PC-9 (cell line): ENCODE measurements at regions of chr16 and their contacts with region 1.

Region 1: GRCh38 chr16:28491970-28492474 is at the start of gene CLN3:
- DNase-seq: peak; percentile 95
- H3K4me3 ChIP-seq: peak within 1 kb of the TSS; percentile 78
- H3K27ac ChIP-seq: peak within 1 kb of the TSS; percentile 91
- H3K4me1 ChIP-seq: peaks cover 26% of the 10 kb centered on the region
- H3K27me3 ChIP-seq: no peaks in the 10 kb centered on the region
- CTCF ChIP-seq: no peak
- total RNA-seq, gene CLN3: 59.1 and 70.3 TPM in 2 replicates

Region 2: DNA sequence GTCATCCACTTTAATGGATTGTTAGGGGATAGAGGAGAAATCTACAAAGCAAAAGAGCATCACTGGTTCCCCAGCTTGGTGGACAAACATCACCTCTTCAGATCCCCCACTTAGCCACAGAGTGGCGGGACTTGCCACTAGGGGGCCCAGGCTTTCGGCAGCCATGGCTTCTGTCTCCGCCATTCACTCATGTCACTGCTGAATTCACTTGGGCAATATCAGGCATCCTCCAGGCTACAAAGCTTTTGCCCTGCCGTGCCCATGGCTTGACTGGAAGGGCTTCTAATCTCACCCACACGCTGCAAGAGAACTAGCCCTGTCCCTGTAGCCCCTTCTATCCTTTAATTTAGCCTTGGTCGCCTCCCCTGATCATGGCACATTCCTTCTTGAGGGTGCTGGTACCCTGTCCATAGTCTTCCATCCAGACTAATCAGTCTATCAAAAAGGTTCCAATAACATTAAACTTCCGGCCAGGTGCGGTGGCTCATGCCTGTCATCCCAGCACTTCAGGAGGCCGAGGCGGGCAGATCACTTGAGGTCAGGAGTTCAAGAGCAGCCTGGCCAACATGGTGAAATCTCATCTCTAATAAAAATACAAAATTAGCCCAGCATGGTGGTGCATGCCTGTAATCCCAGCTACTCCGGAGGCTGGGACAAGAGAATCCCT is 164.9 kb before region 1 on chr16:
- CTCF ChIA-PET with region 1: interaction called, 10 read pairs
- POLR2A ChIA-PET with region 1: no interaction called
- intact Hi-C with region 1: no loop called
- DNase-seq: peak; percentile 56 to 68
- H3K4me3 ChIP-seq: no peak overlapping the region
- H3K27ac ChIP-seq: no peak overlapping the region
- H3K4me1 ChIP-seq: no peaks in the 10 kb centered on the region; the same call in 1 of the 2 replicates
- H3K27me3 ChIP-seq: no peaks in the 10 kb centered on the region
- CTCF ChIP-seq: peak; percentile 79

Region 3: GRCh38 chr16:28504707-28505409 is 12.8 kb after region 1 on chr16:
- CTCF ChIA-PET with region 1: interaction called, 6 read pairs
- POLR2A ChIA-PET with region 1: interaction called, 9 read pairs
- intact Hi-C with region 1: loop called (anchors 1 kb)
- DNase-seq: peak; percentile 93 to 97
- H3K4me3 ChIP-seq: peak overlapping the region; percentile 20; the same call in 1 of the 2 replicates
- H3K27ac ChIP-seq: peak overlapping the region; percentile 70
- H3K4me1 ChIP-seq: peaks cover 41% of the 10 kb centered on the region
- H3K27me3 ChIP-seq: no peaks in the 10 kb centered on the region
- CTCF ChIP-seq: no peak

Region 4: DNA sequence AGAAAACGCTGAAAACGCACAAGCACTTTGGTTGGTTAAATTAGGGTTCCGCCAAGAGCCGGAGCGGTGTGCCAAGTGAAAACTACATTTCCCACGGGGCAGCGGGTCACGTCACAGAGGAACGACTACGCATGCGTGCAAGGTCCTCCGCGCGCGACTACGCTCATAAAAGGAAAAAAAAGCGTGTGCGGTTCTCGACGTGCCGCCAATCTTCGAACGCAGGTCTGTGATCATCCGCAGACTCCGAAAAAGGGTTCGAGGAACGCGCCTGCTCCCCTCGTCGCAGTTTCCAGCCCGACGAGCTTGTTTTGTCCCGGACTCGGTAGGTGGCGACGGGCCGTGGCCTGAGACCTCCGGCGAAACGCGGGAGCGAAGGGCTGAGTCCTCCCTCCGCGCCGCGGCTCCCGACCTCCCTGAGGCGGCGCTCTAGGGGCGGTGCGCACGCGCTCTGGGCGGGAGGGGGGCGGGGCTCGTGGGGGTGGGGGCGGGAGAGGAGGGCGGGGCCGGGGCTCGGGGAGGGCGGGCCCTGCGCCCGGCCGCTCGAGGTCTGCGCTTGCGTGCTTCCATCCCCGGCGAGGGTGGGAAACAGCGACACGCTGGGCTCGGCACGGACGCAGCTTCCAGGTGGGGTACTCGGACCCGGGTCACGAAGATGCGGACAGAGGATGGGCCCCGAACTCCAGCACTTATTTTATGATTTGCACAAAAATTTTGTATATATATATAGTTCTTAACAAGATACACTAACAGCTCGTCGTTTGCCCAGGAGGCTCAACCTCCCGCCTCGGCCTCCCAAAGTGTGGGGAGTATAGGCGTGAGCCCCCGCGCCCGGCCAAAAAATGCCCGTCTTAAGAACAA is 62.0 kb after region 1 on chr16 and contains the start of gene SGF29:
- CTCF ChIA-PET with region 1: interaction called, 4 read pairs
- POLR2A ChIA-PET with region 1: interaction called, 11 read pairs
- intact Hi-C with region 1: loop called (anchors 1 kb)
- DNase-seq: peak; percentile 72 to 94
- H3K4me3 ChIP-seq: peak within 1 kb of the TSS; percentile 74
- H3K27ac ChIP-seq: peak within 1 kb of the TSS; percentile 93
- H3K4me1 ChIP-seq: peaks cover 16% of the 10 kb centered on the region
- H3K27me3 ChIP-seq: no peaks in the 10 kb centered on the region
- CTCF ChIP-seq: peak; percentile 36; the same call in 1 of the 2 replicates
- total RNA-seq, gene SGF29: 45.3 and 51.1 TPM in 2 replicates

Region 5: GRCh38 chr16:28589930-28590329 is 97.9 kb after region 1 on chr16:
- CTCF ChIA-PET with region 1: no interaction called
- POLR2A ChIA-PET with region 1: no interaction called
- intact Hi-C with region 1: no loop called
- DNase-seq: no peak
- H3K4me3 ChIP-seq: no peak overlapping the region
- H3K27ac ChIP-seq: no peak overlapping the region
- H3K4me1 ChIP-seq: peaks cover 39% of the 10 kb centered on the region
- H3K27me3 ChIP-seq: no peaks in the 10 kb centered on the region
- CTCF ChIP-seq: no peak